Ascending aorta (tissue), 2 donors: ENCODE measurements at regions of chr4 and their contacts with region 1.

Region 1: GRCh38 chr4:158172261-158173258 is at the start of gene GASK1B:
- DNase-seq: no peak
- H3K4me3 ChIP-seq: peak within 1 kb of the TSS; percentile 68 to 88
- H3K27ac ChIP-seq: peak within 1 kb of the TSS; percentile 88 to 97
- H3K4me1 ChIP-seq: peaks cover 3 to 43% of the 10 kb centered on the region in 2 donors
- H3K27me3 ChIP-seq: no peaks in the 10 kb centered on the region
- CTCF ChIP-seq: peak; percentile 43 to 66 (median 46)
- total RNA-seq, gene GASK1B: 69.7 TPM

Region 2: DNA sequence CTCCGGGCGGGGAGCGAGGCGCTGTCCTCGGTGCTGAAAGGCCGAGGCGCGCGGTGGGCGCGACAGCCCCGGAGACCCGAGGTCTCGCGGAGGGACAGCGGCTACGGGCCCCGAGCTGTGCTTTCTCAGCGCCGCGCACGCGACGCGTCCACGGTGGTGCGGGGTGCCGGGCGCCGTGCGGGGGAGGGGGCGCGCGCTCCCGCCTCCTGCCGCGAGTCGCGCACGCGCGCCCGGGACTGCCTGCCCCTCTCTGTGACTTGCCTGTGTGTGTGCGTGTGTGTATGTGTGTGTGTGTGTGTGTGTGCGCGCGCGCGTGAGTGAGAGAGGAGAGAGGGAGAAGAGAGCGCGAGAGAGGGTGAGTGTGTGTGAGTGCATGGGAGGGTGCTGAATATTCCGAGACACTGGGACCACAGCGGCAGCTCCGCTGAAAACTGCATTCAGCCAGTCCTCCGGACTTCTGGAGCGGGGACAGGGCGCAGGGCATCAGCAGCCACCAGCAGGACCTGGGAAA is 952.1 kb before region 1 on chr4 and contains the start of gene GRIA2:
- intact Hi-C with region 1: loop called (anchors 2 kb)
- DNase-seq: peak in 1 of 2 donors; percentile 83
- H3K4me3 ChIP-seq: peak within 1 kb of the TSS; percentile 71 to 79
- H3K27ac ChIP-seq: peak within 1 kb of the TSS; percentile 93 to 95
- H3K4me1 ChIP-seq: peaks cover 0 to 10% of the 10 kb centered on the region in 2 donors
- H3K27me3 ChIP-seq: no peaks in the 10 kb centered on the region
- CTCF ChIP-seq: no peak
- total RNA-seq, gene GRIA2: 3.0 TPM

Region 3: GRCh38 chr4:157992038-157992705 is 180.4 kb before region 1 on chr4:
- intact Hi-C with region 1: loop called (anchors 1 kb)
- DNase-seq: no peak
- H3K4me3 ChIP-seq: peak overlapping the region; percentile 57 to 59
- H3K27ac ChIP-seq: peak overlapping the region; percentile 69
- H3K4me1 ChIP-seq: no peaks in the 10 kb centered on the region
- H3K27me3 ChIP-seq: no peaks in the 10 kb centered on the region
- CTCF ChIP-seq: peak; percentile 67 to 78 (median 76)

Region 4: GRCh38 chr4:158102903-158103473 is 69.6 kb before region 1 on chr4:
- intact Hi-C with region 1: no loop called
- DNase-seq: no peak
- H3K4me3 ChIP-seq: no peak overlapping the region
- H3K27ac ChIP-seq: no peak overlapping the region
- H3K4me1 ChIP-seq: peaks cover 0 to 2% of the 10 kb centered on the region in 2 donors
- H3K27me3 ChIP-seq: no peaks in the 10 kb centered on the region
- CTCF ChIP-seq: no peak

Region 5: GRCh38 chr4:158209825-158210807 is 37.6 kb after region 1 on chr4 and contains the start of gene TMEM144:
- intact Hi-C with region 1: loop called (anchors 2 kb)
- DNase-seq: peak; percentile 92 to 98
- H3K4me3 ChIP-seq: peak within 1 kb of the TSS; percentile 54
- H3K27ac ChIP-seq: peak within 1 kb of the TSS; percentile 94 to 96
- H3K4me1 ChIP-seq: peaks cover 0 to 28% of the 10 kb centered on the region in 2 donors
- H3K27me3 ChIP-seq: no peaks in the 10 kb centered on the region
- CTCF ChIP-seq: peak in 1 of 3 experiments; percentile 19
- total RNA-seq, gene TMEM144: 4.0 TPM

Region 6: GRCh38 chr4:158624889-158625478 is 452.4 kb after region 1 on chr4:
- intact Hi-C with region 1: loop called (anchors 10 kb)
- DNase-seq: no peak
- H3K4me3 ChIP-seq: peak overlapping the region in 1 of 2 donors; percentile 37
- H3K27ac ChIP-seq: peak overlapping the region; percentile 30 to 70
- H3K4me1 ChIP-seq: peaks cover 0 to 4% of the 10 kb centered on the region in 2 donors
- H3K27me3 ChIP-seq: no peaks in the 10 kb centered on the region
- CTCF ChIP-seq: peak; percentile 68 to 73 (median 72)

Region 7: DNA sequence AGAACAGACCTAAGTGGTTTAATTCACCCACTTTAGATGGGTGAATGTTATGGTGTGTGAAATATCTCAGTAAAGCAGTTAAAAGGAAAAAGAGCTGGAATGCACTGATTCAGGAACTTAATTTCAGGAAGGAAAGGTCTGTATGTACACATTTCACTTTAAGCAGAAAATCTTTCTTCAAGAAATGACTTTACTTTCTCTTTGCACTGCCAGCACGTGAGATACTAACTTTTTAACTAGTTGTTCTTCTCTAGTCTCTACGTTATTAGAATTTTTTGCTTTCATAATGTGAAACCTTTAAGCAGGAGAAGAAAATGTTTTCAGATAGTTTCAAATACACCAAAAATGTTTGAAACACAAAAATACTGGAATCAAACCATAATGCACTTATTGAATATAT is 480.4 kb after region 1 on chr4:
- intact Hi-C with region 1: no loop called
- DNase-seq: no peak
- H3K4me3 ChIP-seq: peak overlapping the region in 1 of 2 donors; percentile 17
- H3K27ac ChIP-seq: no peak overlapping the region
- H3K4me1 ChIP-seq: no peaks in the 10 kb centered on the region
- H3K27me3 ChIP-seq: no peaks in the 10 kb centered on the region
- CTCF ChIP-seq: no peak